WTC11 (cell line): ENCODE measurements at regions of chr1 and their contacts with region 1.

Region 1: DNA sequence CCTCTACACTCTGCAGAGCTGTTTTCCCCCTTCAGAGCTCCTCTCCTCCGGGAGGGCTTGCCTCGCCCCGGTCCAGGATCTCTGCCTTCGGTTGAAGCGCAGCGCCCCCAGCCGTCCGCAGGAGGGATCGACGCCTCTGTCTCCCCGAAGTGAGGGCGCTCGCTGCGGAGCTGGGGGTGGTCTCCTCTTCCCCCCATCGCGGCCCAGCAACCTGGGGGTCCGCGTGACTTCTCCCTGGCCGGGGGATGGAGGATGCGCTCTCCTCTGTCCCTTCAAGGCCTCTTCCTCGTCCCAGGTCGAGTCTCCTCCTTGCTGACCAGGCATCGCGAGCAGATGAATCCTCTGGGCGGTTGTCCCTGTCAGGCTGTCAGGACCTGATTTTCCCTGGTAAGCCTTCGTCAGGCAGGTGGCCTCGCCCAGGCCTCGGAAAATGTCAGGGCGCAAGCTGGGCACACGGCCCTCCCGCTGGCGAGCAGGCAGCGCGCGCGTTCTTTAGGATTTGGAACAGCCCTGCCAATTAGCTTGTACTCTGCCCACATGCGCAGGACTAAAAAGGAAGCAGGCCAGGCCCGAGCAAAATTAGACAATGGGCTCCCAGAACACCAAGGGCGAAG is 90.5 kb downstream of the EDEM3 start:
- DNase-seq: peak; percentile 92
- ATAC-seq: peak; percentile 96
- H3K4me3 Mint-ChIP-seq: peak overlapping the region; percentile 67
- H3K27ac Mint-ChIP-seq: no peak overlapping the region
- H3K4me1 Mint-ChIP-seq: peaks cover 34% of the 10 kb centered on the region
- H3K27me3 Mint-ChIP-seq: peaks cover 8% of the 10 kb centered on the region
- CTCF ChIP-seq: peak; percentile 89

Region 2: GRCh38 chr1:184222652-184223052 is 441.5 kb before region 1 on chr1:
- CTCF ChIA-PET with region 1: interaction called, 31 read pairs
- POLR2A ChIA-PET with region 1: no interaction called
- DNase-seq: peak; percentile 71
- ATAC-seq: peak; percentile 55; the same call in 1 of the 2 replicates
- H3K4me3 Mint-ChIP-seq: no peak overlapping the region
- H3K27ac Mint-ChIP-seq: no peak overlapping the region
- H3K4me1 Mint-ChIP-seq: 0 out of 2 replicates have a peak, but pooled peaks cover 3% of the 10 kb centered on the region
- H3K27me3 Mint-ChIP-seq: peaks cover 30% of the 10 kb centered on the region
- CTCF ChIP-seq: peak; percentile 81

Region 3: DNA sequence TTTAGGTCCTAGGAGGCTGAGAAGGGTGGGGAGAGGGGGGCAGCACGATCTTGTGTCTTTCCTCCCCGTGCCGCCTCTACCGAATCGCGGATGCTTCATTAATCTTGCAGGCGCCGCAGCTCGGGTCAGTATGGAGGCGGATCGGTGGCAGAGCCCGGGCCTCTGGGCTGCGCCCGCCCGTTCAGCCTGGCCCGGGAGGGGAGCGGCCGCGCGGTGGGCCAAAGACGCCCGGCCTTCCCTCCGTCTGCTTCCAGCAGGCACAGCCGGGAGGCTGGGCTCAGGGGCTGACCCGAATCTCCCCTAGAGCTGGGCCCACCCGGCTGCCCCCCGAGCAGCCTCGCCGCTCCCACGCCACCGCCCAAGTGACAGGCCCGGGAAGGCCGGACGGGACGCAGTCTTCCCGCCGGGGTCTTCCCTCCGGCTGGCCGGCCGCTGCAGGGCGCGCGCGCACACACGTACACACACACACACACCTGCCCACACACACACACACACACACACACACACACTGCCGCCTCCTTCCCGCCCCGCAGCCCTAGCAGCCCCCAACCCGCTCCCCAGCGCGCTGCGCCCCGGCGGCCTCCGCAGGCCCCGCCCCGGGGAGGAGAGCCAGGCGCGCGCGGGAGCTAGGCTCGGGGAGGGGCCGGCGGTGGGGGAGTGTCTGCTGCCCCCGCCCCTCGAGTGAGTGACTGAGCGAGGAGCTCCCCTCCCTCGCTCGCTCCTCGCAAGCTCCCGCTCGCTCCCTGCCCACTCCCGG is 277.7 kb before region 1 on chr1 and contains the start of gene C1orf21:
- CTCF ChIA-PET with region 1: interaction called, 28 read pairs
- POLR2A ChIA-PET with region 1: interaction called, 3 read pairs
- DNase-seq: peak; percentile 85
- ATAC-seq: peak; percentile 85
- H3K4me3 Mint-ChIP-seq: peak within 1 kb of the TSS; percentile 95
- H3K27ac Mint-ChIP-seq: peak within 1 kb of the TSS; percentile 7; the same call in 1 of the 2 replicates
- H3K4me1 Mint-ChIP-seq: peaks cover 67% of the 10 kb centered on the region
- H3K27me3 Mint-ChIP-seq: peaks cover 9% of the 10 kb centered on the region
- CTCF ChIP-seq: no peak
- total RNA-seq, gene C1orf21: 20.1 to 28.5 TPM (median 22.9 TPM) in 3 replicates

Region 4: GRCh38 chr1:184535191-184535970 is 128.8 kb before region 1 on chr1:
- CTCF ChIA-PET with region 1: interaction called, 15 read pairs
- POLR2A ChIA-PET with region 1: no interaction called
- DNase-seq: no peak
- ATAC-seq: no peak
- H3K4me3 Mint-ChIP-seq: no peak overlapping the region
- H3K27ac Mint-ChIP-seq: no peak overlapping the region
- H3K4me1 Mint-ChIP-seq: 0 out of 2 replicates have a peak, but pooled peaks cover 8% of the 10 kb centered on the region
- H3K27me3 Mint-ChIP-seq: no peaks in the 10 kb centered on the region
- CTCF ChIP-seq: no peak

Region 5: DNA sequence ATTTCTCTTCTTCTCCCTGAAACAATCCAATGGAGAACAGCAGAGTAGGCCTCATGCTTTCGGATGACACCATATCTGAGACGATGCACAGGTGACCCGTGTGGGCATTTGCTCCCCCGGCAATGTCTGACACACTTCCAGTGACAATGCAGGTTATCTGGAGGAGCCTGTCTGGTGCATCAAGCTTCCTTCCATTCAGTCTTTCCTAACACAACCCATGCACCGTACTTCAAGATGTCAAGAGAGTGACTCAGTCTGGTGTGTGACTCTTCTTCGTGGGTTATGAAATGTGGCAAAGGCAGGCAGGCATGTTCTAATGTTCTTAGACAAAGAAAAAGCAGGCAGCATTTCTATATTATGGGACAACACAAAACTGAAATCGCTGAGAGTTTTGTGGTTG is 68.6 kb before region 1 on chr1:
- CTCF ChIA-PET with region 1: interaction called, 11 read pairs
- POLR2A ChIA-PET with region 1: no interaction called
- DNase-seq: no peak
- ATAC-seq: no peak
- H3K4me3 Mint-ChIP-seq: no peak overlapping the region
- H3K27ac Mint-ChIP-seq: no peak overlapping the region
- H3K4me1 Mint-ChIP-seq: peaks cover 10% of the 10 kb centered on the region
- H3K27me3 Mint-ChIP-seq: no peaks in the 10 kb centered on the region
- CTCF ChIP-seq: no peak

Region 6: DNA sequence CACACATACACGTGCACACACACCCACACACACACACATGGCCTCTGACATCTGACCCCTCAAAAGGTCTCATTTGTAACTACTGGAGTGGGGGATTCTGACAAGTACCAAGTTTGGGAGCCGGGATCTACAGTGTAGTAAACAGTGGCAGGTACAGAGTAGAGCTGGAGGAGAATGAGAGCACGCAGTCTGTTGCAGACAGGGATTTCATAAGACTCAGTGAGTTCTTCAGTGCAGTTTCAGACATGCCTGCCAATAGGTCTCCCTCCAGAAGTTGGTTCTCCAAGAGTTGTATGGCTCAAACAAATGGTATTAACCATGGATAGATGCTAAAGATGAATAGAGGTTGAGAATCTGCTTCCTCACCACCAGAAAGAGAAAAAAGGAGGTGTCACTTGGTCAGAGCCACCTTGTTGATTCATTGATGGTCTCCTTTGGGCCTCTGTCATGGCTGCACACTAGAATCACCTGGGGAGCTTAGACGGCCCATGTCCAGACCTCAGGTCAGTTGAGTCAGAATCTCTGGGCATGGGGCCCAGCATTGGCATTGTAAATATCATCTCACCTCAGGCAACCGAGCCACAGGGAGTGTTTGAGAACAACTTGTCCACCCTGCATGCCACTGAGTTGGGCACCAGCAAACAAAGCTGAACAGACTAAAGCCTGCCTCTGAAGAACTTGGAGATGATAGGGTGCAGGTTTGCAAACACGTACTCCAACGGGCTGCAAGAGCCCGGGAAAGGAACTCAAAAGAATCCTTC is 31.6 kb before region 1 on chr1:
- CTCF ChIA-PET with region 1: interaction called, 16 read pairs
- POLR2A ChIA-PET with region 1: no interaction called
- DNase-seq: no peak
- ATAC-seq: no peak
- H3K4me3 Mint-ChIP-seq: no peak overlapping the region
- H3K27ac Mint-ChIP-seq: no peak overlapping the region
- H3K4me1 Mint-ChIP-seq: peaks cover 9% of the 10 kb centered on the region
- H3K27me3 Mint-ChIP-seq: no peaks in the 10 kb centered on the region
- CTCF ChIP-seq: no peak

Region 7: DNA sequence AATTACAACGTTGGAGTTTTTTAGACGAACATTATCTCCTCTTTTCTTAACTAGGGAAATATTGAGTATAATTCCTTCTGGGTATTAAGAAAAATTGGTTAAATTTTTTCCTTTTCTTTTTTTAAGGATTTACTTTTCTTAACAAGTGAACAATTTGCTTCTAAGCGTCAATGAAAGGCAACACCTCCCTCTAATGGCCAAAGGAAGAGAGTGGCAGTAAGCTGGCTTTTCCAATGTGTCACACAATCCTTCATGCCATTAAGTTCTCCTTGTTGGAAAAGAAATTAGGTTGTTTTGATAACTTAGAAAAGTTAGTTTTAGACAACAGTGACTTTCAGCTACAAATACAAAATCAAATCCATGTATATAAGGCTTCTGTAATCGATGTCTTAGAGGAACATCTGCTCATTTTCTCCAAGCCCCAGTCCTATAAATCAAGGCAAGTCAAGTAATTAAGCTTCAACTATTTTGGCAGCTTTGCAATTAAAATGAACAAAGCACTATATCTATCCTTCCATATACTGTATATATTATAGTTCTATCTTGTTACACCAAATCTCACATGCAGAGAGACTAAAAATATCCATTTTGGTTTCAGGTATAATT is 27.7 kb after region 1 on chr1:
- CTCF ChIA-PET with region 1: interaction called, 61 read pairs
- POLR2A ChIA-PET with region 1: no interaction called
- DNase-seq: no peak
- ATAC-seq: no peak
- H3K4me3 Mint-ChIP-seq: no peak overlapping the region
- H3K27ac Mint-ChIP-seq: no peak overlapping the region
- H3K4me1 Mint-ChIP-seq: peaks cover 14% of the 10 kb centered on the region
- H3K27me3 Mint-ChIP-seq: no peaks in the 10 kb centered on the region
- CTCF ChIP-seq: peak; percentile 48; the same call in 1 of the 2 replicates

Region 8: GRCh38 chr1:184892116-184892515 is 228.0 kb after region 1 on chr1:
- CTCF ChIA-PET with region 1: no interaction called
- POLR2A ChIA-PET with region 1: no interaction called
- DNase-seq: no peak
- ATAC-seq: no peak
- H3K4me3 Mint-ChIP-seq: no peak overlapping the region
- H3K27ac Mint-ChIP-seq: no peak overlapping the region
- H3K4me1 Mint-ChIP-seq: no peaks in the 10 kb centered on the region
- H3K27me3 Mint-ChIP-seq: peaks cover under 1% of the 10 kb centered on the region; the same call in 1 of the 2 replicates
- CTCF ChIP-seq: no peak